ENCODE measurements at regions of chr1 and their contacts with region 1.

Region 1: DNA sequence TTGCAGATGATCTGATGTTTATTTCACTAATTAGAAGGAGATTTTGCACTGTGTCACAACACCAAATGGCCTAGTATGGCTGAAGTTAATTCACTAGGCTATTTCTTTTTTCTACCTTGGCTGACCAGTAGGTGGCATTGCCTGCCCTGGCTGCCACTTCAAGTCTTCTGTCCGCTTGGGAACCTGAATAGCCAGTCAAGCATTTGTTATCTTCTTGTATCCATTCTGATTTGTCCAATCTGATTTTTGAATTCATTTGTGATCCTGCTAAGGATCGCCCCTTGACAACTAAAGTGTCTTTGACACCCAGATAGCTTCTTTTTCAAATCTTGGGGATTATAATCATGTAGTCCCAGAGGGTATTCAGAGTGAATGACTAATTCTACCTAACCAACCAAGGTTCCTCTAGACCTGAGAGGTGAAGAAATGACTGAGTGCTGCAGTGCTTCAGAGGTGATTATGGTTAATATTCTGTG is 99.4 kb downstream of the GIPC2 start:
- DNase-seq: no peak

Region 2: GRCh38 chr1:78004719-78005447 is 140.3 kb before region 1 on chr1 and contains the start of gene DNAJB4:
- intact Hi-C with region 1: no loop called
- DNase-seq: no peak
- total RNA-seq, gene DNAJB4: 140 TPM

Region 3: DNA sequence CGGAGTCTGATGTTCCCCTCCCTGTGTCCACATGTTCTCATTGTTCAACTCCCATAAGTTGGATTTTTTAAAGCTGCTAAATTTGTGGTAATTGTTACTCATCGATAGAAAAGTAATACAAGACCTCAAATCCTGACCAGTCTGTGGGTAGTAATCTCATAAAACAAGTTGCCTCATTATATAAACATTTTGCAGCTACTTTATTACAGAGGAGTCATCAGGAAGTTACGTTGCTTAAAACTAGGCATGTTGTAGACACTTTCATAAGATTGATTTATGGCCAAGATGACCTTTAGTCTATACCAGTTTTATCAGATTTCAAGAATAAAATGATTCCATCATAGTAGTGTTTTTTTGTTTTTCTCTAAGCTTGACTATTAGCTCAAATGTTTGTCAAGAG is 109.4 kb after region 1 on chr1:
- intact Hi-C with region 1: loop called (anchors 10 kb)
- DNase-seq: no peak

Region 4: GRCh38 chr1:78607334-78607927 is 462.3 kb after region 1 on chr1:
- intact Hi-C with region 1: loop called (anchors 5 kb)
- DNase-seq: no peak

Region 5: DNA sequence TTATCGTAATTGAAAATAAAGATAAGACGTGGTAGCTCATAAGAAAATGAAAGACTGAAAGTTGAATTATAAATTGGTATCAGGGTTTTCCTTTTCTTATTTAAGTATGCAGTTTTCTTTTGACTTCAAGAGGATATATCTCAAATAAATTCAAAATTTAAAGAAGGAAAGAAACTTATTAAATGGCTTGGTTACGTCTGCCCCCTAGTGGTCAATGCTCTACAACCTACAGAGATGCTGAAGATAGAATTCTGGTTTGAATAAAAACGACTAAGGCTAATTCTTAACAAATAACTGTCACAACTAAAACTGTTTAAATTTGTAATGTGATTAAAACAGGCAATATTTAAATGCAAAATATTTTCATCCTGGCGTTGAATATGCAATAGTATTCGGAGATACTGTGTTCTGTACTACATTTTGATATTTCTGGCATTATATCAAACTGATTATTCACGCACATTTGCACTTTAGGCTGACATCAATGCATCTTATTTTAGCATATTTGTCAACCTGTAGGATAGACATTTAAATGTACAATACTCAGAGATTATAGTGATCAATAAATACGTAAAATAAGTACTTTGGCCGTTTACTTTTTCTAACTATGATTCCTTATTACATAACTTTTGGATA is 531.3 kb after region 1 on chr1:
- intact Hi-C with region 1: loop called (anchors 5 kb)
- DNase-seq: no peak

Measured in cardiac septum (tissue), 1 donor.